ENCODE measurements at regions of chr6 and their contacts with region 1.

Region 1: DNA sequence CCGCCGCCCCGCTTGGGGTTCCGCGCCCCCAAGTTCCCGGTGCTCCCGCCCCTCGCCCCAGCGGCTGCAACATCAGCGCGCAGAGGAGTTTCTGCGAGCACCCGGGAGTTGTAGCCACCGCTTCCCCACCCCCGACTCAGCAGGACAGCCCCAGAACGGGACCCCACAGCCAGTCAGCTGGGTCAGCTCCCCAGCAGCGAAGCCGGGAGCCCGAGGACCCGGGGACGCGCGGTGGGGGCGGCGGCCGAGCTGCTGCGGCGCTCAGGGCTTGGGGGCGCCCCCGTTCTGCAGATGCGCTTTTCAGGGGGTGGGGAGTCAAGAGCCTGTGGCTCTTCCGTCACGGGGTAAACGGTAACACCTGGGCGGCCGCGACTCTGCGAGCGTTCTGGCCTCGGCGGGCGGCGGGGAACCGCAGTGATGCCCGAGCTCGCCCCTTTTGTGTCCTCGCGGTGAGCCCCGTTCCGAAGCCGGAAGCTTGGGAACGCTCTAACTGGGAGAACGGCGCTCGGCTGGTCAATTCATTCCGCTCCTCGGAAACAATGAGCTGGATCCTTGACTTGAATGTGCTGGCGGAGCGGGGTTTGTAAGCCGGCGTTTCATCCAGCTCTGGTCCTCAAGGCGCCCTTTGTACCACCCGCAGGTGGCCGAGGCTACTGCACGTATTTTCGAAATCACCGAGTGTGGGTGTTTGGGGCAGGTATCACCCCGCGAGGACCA is 774 bp downstream of the PLEKHG1 start:
- DNase-seq: peak; percentile 47
- H3K4me3 ChIP-seq: peak overlapping the region; percentile 86
- H3K27ac ChIP-seq: peak overlapping the region; percentile 94
- H3K4me1 ChIP-seq: peaks cover 27% of the 10 kb centered on the region
- H3K27me3 ChIP-seq: peaks cover 12% of the 10 kb centered on the region
- CTCF ChIP-seq: peak; percentile 68

Region 2: GRCh38 chr6:150417899-150418826 is 182.3 kb before region 1 on chr6:
- intact Hi-C with region 1: loop called (anchors 10 kb)
- DNase-seq: no peak
- H3K4me3 ChIP-seq: peak overlapping the region; percentile 62
- H3K27ac ChIP-seq: peak overlapping the region; percentile 76
- H3K4me1 ChIP-seq: peaks cover 15% of the 10 kb centered on the region
- H3K27me3 ChIP-seq: no peaks in the 10 kb centered on the region
- CTCF ChIP-seq: peak; percentile 90

Region 3: DNA sequence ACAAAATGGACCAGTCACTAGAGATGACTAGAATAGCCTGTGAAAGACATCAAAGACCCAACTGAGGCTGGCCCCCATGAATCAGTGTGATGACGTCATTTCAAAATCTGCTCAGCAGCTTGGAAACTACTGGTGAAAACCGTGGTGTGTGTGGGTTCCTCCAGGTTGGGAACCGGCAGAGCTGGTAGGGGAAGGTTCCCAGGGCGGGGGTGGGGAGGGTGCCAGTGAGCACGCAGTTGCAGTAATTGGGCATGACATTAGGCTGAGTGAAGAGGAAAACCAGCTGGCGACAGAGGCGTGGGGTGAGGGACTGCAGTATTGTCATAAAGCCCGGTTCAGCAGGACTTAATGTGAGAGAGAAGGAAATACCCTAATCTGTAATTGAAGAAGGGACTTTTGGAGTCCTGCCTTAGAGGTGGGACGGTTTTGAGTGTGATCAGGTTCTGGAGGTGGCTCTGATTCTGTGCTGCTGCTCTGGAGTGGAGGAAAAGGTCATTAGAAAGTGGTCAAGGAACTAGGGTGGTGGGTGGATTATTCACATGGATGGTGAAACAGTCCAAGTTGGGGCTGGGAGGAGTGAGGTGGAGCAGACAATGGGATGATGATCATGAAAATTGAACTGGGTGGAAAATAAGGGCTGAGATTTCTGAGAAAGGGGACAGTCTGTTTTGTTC is 213.0 kb after region 1 on chr6:
- intact Hi-C with region 1: loop called (anchors 10 kb)
- DNase-seq: no peak
- H3K4me3 ChIP-seq: no peak overlapping the region
- H3K27ac ChIP-seq: peak overlapping the region; percentile 76
- H3K4me1 ChIP-seq: peaks cover 43% of the 10 kb centered on the region
- H3K27me3 ChIP-seq: no peaks in the 10 kb centered on the region
- CTCF ChIP-seq: no peak